ENCODE measurements at regions of chr13 and their contacts with region 1.

Region 1: GRCh38 chr13:40026174-40026585 is 370.7 kb downstream of the COG6 start:
- DNase-seq: peak; percentile 82
- H3K4me3 Mint-ChIP-seq: no peak overlapping the region
- H3K27ac Mint-ChIP-seq: no peak overlapping the region
- H3K4me1 Mint-ChIP-seq: peaks cover 33% of the 10 kb centered on the region
- H3K27me3 Mint-ChIP-seq: peaks cover 2% of the 10 kb centered on the region

Region 2: GRCh38 chr13:39777527-39778061 is 248.6 kb before region 1 on chr13:
- CTCF ChIA-PET with region 1: no interaction called
- intact Hi-C with region 1: loop called (anchors 1 kb)
- DNase-seq: peak; percentile 70
- H3K4me3 Mint-ChIP-seq: no peak overlapping the region
- H3K27ac Mint-ChIP-seq: peak overlapping the region; percentile 80
- H3K4me1 Mint-ChIP-seq: peaks cover 46% of the 10 kb centered on the region
- H3K27me3 Mint-ChIP-seq: no peaks in the 10 kb centered on the region

Region 3: GRCh38 chr13:39952249-39953233 is 73.6 kb before region 1 on chr13:
- CTCF ChIA-PET with region 1: interaction called, 3 read pairs
- intact Hi-C with region 1: loop called (anchors 1 kb)
- DNase-seq: peak; percentile 27
- H3K4me3 Mint-ChIP-seq: no peak overlapping the region
- H3K27ac Mint-ChIP-seq: peak overlapping the region; percentile 5
- H3K4me1 Mint-ChIP-seq: peaks cover 48% of the 10 kb centered on the region
- H3K27me3 Mint-ChIP-seq: no peaks in the 10 kb centered on the region

Region 4: DNA sequence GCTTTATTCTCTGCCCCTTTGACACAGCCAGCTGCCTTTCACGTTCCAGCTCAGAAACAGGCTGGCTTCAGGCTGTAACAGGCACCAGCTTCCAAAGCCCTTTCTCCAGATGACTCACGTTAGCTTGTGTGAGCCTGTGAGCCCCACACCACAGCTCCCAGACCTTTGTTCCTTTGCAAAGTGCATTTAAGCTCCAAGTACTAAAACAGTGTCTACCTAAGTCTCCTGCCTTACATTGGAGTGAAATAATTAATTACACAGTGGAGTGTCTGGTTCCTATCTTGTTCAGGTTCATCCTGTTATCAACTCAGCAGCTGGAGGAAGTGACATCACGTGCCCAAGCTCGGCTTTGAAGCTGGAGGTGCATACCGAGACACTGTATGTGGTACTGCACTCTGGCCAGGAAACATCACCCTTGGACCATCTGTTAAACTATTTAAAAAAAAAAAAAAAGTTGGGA is 164.5 kb after region 1 on chr13:
- CTCF ChIA-PET with region 1: no interaction called
- intact Hi-C with region 1: loop called (anchors 5 kb)
- DNase-seq: peak; percentile 91
- H3K4me3 Mint-ChIP-seq: peak overlapping the region; percentile 36
- H3K27ac Mint-ChIP-seq: peak overlapping the region; percentile 81
- H3K4me1 Mint-ChIP-seq: peaks cover 69% of the 10 kb centered on the region
- H3K27me3 Mint-ChIP-seq: no peaks in the 10 kb centered on the region

Region 5: DNA sequence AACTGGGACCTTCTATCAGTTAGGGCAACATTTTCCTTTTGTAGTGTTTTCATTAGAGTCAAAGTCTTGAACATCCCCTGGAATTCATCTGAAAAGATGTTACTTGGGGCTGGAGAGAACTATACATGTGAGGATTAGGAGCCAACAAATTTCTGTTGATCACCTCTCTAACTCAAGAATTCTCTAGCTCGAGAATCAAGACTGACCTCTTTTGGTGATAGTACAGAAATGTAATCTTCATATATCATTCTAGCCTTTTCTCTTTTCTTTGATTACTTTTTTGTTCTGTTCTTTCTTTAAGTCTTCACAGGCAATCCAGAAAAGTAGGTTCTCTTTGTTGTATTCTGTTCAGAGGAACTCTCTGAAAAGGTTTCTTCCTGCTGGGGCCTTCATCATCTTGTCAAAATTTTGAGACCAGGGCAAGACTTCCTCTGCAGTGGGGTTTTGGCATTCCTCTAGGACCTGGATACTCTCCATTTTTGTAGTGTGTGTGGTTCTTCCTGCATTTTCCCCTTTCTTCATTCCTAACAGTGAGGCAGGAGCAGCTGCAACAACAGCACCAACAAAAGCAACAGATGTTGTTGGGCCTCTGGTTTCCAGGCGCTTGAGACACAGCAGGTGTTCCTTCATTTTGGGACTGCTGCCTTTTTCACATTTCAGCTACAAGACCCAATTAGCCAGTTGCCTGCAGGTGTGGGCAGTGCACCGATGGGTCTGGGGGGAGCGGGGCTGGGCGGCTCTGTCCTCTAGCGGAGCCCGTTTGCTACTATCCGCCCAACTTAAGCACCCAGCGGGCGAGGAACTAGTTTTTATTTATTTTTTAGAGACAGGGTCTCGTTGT is 966.7 kb after region 1 on chr13:
- CTCF ChIA-PET with region 1: no interaction called
- intact Hi-C with region 1: loop called (anchors 10 kb)
- DNase-seq: no peak
- H3K4me3 Mint-ChIP-seq: no peak overlapping the region
- H3K27ac Mint-ChIP-seq: peak overlapping the region; percentile 69
- H3K4me1 Mint-ChIP-seq: peaks cover 90% of the 10 kb centered on the region
- H3K27me3 Mint-ChIP-seq: no peaks in the 10 kb centered on the region

Measured in activated naive CD4-positive, alpha-beta T cell treated with anti-CD3 and anti-CD28 coated beads for 36 hours (primary cell).